Lower leg skin (tissue), 4 donors: ENCODE measurements at regions of chr18 and their contacts with region 1.

Region 1: DNA sequence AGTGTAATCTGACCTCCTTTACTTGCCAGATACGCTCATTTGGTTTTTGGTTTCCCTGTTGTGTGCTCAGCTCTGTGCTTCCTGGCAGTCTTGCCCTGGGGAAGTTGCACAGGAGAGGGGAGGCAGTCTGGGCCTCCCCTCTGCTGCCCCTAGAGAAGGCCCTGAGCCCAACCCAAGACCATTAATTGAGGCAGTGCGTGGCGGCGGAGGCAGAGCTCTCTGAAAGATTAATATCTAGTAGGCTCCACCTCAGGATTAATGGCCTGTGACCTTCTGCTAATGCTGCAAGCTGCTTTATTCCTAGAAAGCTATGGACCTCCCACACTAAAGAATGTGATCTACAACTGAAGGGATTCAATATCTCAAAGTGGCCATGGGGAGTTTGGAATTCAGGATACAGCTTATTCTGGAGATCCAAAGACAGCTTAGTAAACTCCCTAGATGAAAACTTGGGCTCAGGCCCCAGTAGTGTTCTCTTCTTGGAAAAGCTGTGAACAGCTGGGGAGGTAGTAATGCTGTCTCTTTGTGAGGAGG is 41.4 kb upstream of the MAPRE2 start:
- DNase-seq: no peak
- H3K4me3 ChIP-seq: no peak overlapping the region
- CTCF ChIP-seq: no peak
- POLR2A ChIP-seq: no peak

Region 2: GRCh38 chr18:34626404-34627137 is 373.3 kb before region 1 on chr18:
- intact Hi-C with region 1: no loop called
- DNase-seq: no peak
- H3K4me3 ChIP-seq: no peak overlapping the region
- CTCF ChIP-seq: no peak
- POLR2A ChIP-seq: no peak

Region 3: GRCh38 chr18:34661464-34662111 is 338.2 kb before region 1 on chr18:
- intact Hi-C with region 1: no loop called
- DNase-seq: no peak
- H3K4me3 ChIP-seq: no peak overlapping the region
- CTCF ChIP-seq: no peak
- POLR2A ChIP-seq: no peak

Region 4: DNA sequence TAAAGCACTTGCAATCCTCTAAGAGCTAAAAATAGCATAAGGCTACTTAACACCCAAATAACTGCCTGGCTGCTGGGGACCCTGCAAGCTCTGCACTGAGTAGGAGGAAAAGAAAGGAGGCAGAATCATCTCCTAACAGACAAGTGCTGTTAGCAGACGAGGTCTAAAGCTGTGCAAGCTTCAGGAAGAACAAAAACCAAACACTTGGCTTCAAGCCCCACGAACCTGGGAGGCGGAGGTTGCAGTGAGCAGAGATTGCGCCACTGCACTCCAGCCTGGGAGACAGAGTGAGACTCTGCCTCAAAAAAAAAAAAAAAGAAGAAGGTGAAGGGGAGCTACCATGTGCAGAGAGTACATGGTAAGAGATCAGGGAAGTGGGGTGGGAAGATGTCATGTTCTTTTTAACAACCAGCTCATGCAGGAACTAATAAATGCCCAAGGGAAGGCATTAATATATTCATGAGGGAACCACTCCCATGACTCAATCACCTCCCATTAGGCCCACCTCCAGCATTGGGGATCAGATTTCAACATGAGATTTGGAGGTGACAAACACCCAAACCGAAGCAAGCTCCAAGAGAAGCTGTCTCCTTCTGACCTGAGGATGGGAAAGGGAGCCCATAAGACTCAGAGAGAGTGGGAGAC is 526.8 kb after region 1 on chr18:
- intact Hi-C with region 1: loop called (anchors 10 kb)
- DNase-seq: peak in 1 of 2 donors; percentile 34
- H3K4me3 ChIP-seq: no peak overlapping the region
- CTCF ChIP-seq: no peak
- POLR2A ChIP-seq: no peak